WTC11 (cell line): ENCODE measurements at regions of chr10 and their contacts with region 1.

Region 1: GRCh38 chr10:123666318-123667236 is at the start of gene GPR26:
- DNase-seq: peak; percentile 63
- ATAC-seq: peak; percentile 66
- H3K4me3 Mint-ChIP-seq: peak within 1 kb of the TSS; percentile 72
- H3K27ac Mint-ChIP-seq: no peak within 1 kb of the TSS
- H3K4me1 Mint-ChIP-seq: peaks cover 16% of the 10 kb centered on the region
- H3K27me3 Mint-ChIP-seq: peaks cover 58% of the 10 kb centered on the region
- CTCF ChIP-seq: no peak
- total RNA-seq, gene GPR26: 0.05 to 0.07 TPM (median 0.07 TPM) in 3 replicates

Region 2: GRCh38 chr10:123472606-123473005 is 194.0 kb before region 1 on chr10:
- CTCF ChIA-PET with region 1: no interaction called
- POLR2A ChIA-PET with region 1: no interaction called
- DNase-seq: peak; percentile 36
- ATAC-seq: peak; percentile 80
- H3K4me3 Mint-ChIP-seq: no peak overlapping the region
- H3K27ac Mint-ChIP-seq: no peak overlapping the region
- H3K4me1 Mint-ChIP-seq: peaks cover 38% of the 10 kb centered on the region
- H3K27me3 Mint-ChIP-seq: peaks cover 12% of the 10 kb centered on the region
- CTCF ChIP-seq: no peak

Region 3: DNA sequence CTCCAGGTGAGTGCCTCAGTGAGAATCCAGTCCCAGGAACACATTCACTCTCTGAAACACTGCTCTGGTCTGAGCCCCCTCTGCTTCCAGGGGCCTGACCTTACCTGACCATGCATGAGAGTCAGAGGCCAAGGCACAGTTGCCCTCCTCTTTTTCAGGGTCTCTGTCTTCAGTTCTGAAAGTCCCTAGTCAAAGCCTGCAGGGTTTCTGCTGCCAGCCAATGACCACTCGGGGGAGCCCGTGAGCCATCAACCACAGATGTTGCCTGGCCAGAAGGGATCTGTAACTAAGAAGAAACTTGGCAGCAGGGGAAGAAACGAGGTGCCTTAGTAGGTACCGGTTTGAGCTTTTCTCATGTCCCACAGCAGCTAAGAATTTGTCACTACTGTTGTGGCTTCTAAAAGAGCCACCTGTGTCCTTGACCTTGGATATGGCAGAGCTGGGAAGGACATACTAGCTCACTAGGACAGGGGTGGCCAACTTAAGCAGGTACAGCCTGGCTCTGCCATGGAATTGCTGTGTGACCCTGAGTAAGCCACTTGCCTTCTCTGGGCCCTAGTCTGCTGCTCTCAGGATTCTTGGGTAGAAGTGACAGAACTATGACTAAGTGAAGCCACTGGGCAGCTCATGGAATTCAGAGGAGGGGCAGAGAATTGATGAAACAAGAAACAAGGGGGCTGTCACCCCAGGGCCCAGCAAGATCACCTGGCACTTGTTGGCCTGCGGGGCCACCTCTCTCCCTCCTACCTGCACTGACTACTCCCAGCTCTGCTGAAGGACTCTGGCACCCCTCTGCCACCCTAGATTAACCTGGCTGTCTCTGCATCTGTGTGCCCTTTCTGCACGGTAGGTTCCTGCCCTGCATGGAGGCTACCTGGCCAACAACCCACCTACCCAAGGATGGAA is 84.2 kb before region 1 on chr10:
- CTCF ChIA-PET with region 1: interaction called, 105 read pairs
- POLR2A ChIA-PET with region 1: no interaction called
- DNase-seq: peak; percentile 92
- ATAC-seq: peak; percentile 68
- H3K4me3 Mint-ChIP-seq: no peak overlapping the region
- H3K27ac Mint-ChIP-seq: no peak overlapping the region
- H3K4me1 Mint-ChIP-seq: peaks cover 27% of the 10 kb centered on the region
- H3K27me3 Mint-ChIP-seq: peaks cover 19% of the 10 kb centered on the region
- CTCF ChIP-seq: peak; percentile 60

Region 4: DNA sequence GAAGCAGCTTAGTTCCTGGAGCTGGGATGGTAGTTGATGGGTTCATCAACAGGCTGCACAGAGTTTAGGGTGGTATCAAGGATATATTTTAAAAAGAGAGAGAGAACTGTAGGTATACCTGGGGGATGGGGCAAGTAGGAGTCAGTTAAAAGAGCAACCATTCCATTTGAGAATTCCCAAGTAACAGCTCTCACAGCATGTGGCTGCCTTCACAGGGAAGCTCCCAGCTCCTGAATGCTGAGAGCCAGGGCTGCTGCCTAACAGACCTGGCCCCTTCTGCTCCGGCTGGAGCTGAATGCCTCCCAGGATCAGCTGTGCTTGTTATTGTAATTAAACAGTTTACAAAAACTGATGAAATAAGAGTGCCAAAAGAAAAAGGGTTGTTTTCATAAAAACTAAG is 59.2 kb before region 1 on chr10:
- CTCF ChIA-PET with region 1: interaction called, 17 read pairs
- POLR2A ChIA-PET with region 1: no interaction called
- DNase-seq: peak; percentile 73
- ATAC-seq: peak; percentile 93
- H3K4me3 Mint-ChIP-seq: peak overlapping the region; percentile 47
- H3K27ac Mint-ChIP-seq: peak overlapping the region; percentile 81
- H3K4me1 Mint-ChIP-seq: peaks cover 52% of the 10 kb centered on the region
- H3K27me3 Mint-ChIP-seq: peaks cover 15% of the 10 kb centered on the region
- CTCF ChIP-seq: no peak

Region 5: DNA sequence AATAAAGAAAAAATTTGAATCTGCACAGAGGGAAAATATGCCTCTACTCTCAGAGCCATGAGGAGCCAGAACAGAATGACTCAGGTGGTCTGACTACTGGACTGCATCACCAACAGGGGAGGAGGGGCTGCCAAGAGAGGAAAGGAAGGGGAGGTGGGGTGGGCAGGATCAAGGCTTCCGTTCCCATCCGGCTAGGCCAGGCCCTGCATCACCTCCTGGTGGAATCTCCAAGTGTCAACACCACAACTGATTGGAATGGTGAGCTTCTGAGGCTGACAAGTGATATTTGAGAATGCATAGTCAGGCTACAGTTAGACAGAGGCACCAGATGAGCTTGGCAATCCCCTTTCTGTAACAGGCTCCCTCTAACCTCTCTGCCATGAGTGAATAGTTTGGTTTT is 10.8 kb before region 1 on chr10:
- CTCF ChIA-PET with region 1: interaction called, 10 read pairs
- POLR2A ChIA-PET with region 1: no interaction called
- DNase-seq: peak; percentile 76
- ATAC-seq: peak; percentile 98
- H3K4me3 Mint-ChIP-seq: no peak overlapping the region
- H3K27ac Mint-ChIP-seq: no peak overlapping the region
- H3K4me1 Mint-ChIP-seq: peaks cover 16% of the 10 kb centered on the region
- H3K27me3 Mint-ChIP-seq: no peaks in the 10 kb centered on the region
- CTCF ChIP-seq: no peak